ENCODE measurements at regions of chr10 and their contacts with region 1.

Region 1: DNA sequence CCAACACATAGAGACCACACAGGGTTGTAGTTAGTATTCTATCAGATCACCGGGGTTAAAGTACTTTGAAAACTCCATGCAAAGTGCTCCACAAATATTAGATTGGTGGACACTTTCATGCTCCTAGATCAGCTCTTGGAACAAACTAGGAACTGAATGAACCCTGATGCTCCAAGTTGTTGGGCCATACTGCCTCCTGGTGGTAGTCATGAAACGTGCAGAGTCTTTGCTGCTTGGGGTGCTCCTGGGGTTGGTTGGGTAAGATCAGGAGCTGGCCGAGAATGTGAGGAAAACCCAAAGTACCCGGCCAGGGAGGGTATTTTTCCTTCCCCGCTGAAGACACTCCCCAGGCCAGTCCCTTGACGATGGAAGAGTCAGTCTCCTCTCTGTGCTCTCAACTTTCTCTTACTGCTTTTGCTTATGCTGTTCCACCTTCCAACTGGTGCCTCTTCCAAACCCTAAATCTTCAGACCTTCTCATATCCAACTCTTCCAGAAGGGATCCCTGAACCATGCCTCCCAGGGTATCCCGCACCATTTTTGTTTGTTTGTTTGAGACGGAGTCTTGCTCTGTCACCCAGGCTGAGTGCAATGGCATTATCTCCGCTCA is 920 bp upstream of the RPEL1 start:
- DNase-seq: peak; percentile 32 to 94 (median 76)

Region 2: DNA sequence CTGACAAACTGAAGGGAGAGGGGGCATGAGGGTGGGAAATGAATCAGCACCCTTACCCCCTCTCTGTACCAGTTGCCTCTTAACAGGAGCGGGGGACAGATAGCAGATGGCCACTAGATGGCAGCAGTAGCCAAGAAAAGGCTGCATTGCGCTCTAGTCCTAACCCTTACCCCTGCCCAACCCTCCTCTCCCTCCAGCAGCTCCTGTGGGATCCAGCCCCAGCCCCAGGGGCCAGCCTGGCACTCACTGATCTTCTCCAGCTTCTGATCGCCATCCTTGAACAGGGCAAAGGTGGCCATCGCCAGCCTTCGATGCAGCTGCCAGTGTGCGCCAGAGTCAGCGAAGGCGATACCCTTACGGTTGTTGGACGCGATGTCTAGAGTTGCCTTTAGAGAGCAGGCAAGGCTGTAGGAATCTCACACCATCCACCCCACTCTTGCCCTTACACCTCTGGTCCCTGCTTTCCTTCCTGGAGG is 409.7 kb before region 1 on chr10:
- intact Hi-C with region 1: loop called (anchors 10 kb)
- DNase-seq: peak; percentile 47 to 95 (median 76)

Region 3: GRCh38 chr10:103062604-103063590 is 181.9 kb before region 1 on chr10:
- intact Hi-C with region 1: loop called (anchors 5 kb)
- DNase-seq: peak in 8 of 10 donors; percentile 31 to 92 (median 62)

Region 4: DNA sequence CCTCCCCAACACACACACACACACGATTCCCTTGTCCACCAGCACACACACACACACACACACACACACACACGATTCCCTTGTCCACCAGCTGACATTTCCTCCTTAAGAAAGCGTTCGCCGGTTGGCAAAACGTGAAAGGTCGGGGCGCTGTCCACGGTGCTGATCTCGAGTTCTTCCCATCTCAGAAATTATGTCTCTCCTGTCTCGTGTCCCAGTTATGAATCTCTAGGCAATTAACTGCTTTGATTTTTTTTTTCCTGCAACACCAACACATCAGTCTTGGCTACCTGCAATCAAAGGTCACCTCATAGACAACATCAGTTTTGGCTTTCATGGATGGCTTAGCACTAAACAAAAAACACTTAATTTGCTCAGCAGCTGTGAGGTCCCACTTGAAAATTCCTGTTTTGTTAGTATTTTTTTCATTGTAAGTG is 34.1 kb after region 1 on chr10:
- intact Hi-C with region 1: no loop called
- DNase-seq: peak in 1 of 10 donors; percentile 23

Region 5: GRCh38 chr10:103382769-103383168 is 138.0 kb after region 1 on chr10:
- intact Hi-C with region 1: no loop called
- DNase-seq: no peak

Measured in posterior cingulate gyrus (tissue), 11 donors.